ENCODE measurements at regions of chr9 and their contacts with region 1.

Region 1: DNA sequence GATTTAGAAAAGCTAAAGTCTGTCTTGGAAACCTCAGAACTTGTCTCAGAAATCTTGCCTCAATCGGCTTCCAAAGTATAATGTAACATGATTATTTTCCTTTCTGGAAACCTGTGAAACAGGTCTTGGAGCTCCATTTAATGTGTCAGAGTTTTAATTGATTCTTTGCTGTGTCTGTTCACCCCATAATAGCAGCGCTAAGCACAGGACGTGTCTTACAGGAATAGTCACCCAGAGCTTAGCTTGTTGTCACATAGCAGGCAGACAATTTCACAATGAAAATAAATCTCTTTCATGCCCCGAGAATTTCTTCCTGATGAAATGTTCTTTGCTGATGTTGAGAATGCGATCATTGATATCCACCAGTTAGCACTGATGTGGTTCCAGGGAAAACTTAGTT is 40.2 kb upstream of the PTPN3 start:
- DNase-seq: no peak
- ATAC-seq: no peak
- H3K4me3 ChIP-seq: no peak overlapping the region
- H3K4me3 Mint-ChIP-seq: no peak overlapping the region
- H3K27ac ChIP-seq: no peak overlapping the region
- H3K27ac Mint-ChIP-seq: no peak overlapping the region
- H3K4me1 ChIP-seq: no peaks in the 10 kb centered on the region
- H3K4me1 Mint-ChIP-seq: no peaks in the 10 kb centered on the region
- H3K27me3 ChIP-seq: peaks cover 2 to 5% of the 10 kb centered on the region in 2 experiments
- H3K27me3 Mint-ChIP-seq: peaks cover 15 to 23% of the 10 kb centered on the region in 2 donors

Region 2: DNA sequence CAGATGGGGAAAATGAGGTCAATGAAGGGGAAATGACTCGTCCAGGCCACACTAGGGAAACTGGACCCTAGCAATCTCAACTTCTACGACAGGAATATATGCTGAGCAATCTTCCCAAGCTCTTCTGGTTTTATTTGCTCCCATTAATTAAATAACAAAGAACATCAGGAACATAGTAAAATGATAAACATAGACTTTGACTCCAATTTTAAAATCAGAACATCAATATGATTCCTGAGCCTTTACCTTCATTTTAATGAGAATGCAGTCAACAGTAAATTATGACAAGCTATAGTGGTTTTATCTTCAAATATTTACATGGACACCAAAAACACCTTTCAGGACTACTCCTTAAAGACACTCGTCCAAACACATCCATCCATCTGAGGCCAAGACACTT is 297.1 kb before region 1 on chr9:
- CTCF ChIA-PET with region 1: interaction called in 1 of 2 experiments, 10 read pairs
- POLR2A ChIA-PET with region 1: no interaction called
- DNase-seq: no peak
- ATAC-seq: no peak
- H3K4me3 ChIP-seq: no peak overlapping the region
- H3K4me3 Mint-ChIP-seq: no peak overlapping the region
- H3K27ac ChIP-seq: no peak overlapping the region
- H3K27ac Mint-ChIP-seq: no peak overlapping the region
- H3K4me1 ChIP-seq: no peaks in the 10 kb centered on the region
- H3K4me1 Mint-ChIP-seq: peaks cover 4 to 8% (median 4%) of the 10 kb centered on the region in 3 donors
- H3K27me3 ChIP-seq: peaks cover 8 to 19% of the 10 kb centered on the region in 2 experiments
- H3K27me3 Mint-ChIP-seq: peaks cover 51 to 58% of the 10 kb centered on the region in 2 donors

Region 3: DNA sequence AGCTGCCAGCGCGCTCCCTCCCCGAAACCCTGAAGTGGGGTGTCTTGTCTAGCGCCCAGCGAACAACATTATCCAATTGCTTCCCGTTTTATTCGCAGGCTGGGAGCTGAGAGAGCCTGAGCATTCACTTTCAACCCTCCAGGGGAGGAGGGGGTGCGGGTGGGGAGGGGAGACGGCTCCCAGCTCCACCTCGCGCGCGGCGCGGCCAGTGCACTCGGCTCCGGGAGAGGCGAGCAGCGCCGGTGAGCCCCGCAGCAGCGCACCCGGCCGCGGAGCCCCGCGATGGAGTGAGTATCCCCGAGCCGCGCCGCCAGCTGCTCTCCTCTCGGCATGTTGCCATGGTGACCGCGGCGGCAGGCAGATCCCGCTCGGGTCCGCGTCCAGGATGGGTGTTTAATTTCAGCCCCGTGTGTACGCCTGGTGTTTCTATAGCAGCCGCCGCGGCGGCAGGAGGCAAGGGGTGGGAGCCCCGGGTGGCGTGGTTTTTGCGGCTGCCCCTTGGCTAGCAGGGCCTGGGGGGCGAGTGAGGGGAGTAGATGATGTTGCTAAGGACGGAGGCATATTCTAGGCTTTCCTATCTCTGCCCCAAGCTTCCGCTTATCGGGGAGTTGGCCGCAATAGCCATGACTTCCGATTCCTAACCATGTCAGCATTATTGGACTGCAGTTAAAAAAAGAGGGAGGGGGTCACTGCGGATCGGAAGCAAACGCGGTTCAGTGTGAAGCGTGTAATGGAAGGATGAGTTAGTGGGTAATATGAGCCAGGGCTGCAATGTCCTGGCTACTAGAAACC is 102.4 kb after region 1 on chr9:
- CTCF ChIA-PET with region 1: no interaction called
- POLR2A ChIA-PET with region 1: no interaction called
- DNase-seq: no peak
- ATAC-seq: no peak
- H3K4me3 ChIP-seq: no peak overlapping the region
- H3K4me3 Mint-ChIP-seq: no peak overlapping the region
- H3K27ac ChIP-seq: no peak overlapping the region
- H3K27ac Mint-ChIP-seq: no peak overlapping the region
- H3K4me1 ChIP-seq: no peaks in the 10 kb centered on the region
- H3K4me1 Mint-ChIP-seq: no peaks in the 10 kb centered on the region
- H3K27me3 ChIP-seq: peaks cover 16 to 26% of the 10 kb centered on the region in 2 experiments
- H3K27me3 Mint-ChIP-seq: peaks cover 50 to 60% of the 10 kb centered on the region in 2 donors

Measured in T-cell (primary cell).